Activated CD4-positive, alpha-beta T cell treated with anti-CD3 and anti-CD28 coated beads for 36 hours (primary cell): ENCODE measurements at regions of chrX and their contacts with region 1.

Region 1: GRCh38 chrX:134501941-134502340 is 42.0 kb downstream of the HPRT1 start:
- DNase-seq: no peak
- ATAC-seq: no peak
- H3K4me3 Mint-ChIP-seq: no peak overlapping the region
- H3K27ac Mint-ChIP-seq: no peak overlapping the region
- H3K4me1 Mint-ChIP-seq: no peaks in the 10 kb centered on the region
- H3K27me3 Mint-ChIP-seq: no peaks in the 10 kb centered on the region

Region 2: DNA sequence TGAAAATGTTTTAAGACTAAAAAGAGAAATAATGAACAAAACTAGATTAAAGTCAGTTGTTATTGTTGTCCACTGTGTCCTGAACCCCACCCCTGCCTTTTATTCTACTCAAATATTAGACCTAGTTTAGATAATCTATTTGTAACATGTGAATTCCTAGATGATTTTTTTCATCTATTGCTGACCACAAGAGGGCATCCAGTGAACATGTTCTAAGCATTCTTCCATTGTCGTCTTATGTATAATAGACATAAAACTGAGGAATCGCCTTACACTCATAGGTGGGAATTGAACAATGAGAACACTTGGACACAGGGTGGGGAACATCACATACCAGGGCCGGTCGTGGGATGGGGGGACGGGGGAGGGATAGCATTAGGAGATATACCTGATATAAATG is 78.3 kb before region 1 on chrX:
- CTCF ChIA-PET with region 1: no interaction called
- POLR2A ChIA-PET with region 1: interaction called, 11 read pairs
- intact Hi-C with region 1: no loop called
- DNase-seq: no peak
- ATAC-seq: no peak
- H3K4me3 Mint-ChIP-seq: no peak overlapping the region
- H3K27ac Mint-ChIP-seq: no peak overlapping the region
- H3K4me1 Mint-ChIP-seq: no peaks in the 10 kb centered on the region
- H3K27me3 Mint-ChIP-seq: no peaks in the 10 kb centered on the region